ENCODE measurements at regions of chr14 and their contacts with region 1.

Region 1: DNA sequence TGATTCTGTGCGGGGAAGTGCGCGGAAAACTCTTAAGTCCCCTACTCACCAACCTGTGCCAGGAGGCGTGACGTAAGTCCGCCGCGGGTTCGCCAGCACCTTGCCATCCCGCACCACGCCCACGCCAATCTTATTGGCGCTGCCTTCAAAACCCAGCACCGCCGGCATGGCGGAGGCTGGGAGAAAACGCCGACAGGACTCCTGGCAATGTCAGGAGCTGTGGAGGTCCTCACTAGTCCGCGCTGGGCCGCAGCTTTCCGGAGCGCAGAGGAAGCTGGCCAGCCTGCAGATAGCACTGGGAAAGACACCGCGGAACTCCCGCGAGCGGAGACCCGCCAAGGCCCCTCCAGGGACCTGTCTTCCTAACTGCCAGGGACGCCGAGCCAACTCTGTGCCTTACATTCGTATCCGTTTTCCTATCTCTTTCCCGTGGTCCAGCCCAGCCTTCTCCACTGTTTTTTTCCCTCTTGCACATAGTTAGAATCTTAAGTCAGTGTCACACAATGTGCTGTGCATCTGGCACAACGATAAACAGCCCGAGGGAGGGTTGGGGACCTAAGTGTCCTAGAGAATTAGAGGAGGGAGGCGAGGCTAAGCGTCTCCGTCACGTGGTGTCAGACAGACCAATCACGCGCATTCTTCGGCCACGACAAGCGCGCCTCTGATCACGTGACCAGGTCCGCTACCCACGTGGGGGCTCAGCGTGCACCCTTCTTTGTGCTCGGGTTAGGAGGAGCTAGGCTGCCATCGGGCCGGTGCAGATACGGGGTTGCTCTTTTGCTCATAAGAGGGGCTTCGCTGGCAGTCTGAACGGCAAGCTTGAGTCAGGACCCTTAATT is at the starts of genes APEX1 and OSGEP:
- DNase-seq: peak; percentile 97 to 100 (median 99)

Region 2: GRCh38 chr14:20413045-20413799 is 41.5 kb before region 1 on chr14 and contains the start of gene TEP1:
- intact Hi-C with region 1: loop called (anchors 2 kb)
- DNase-seq: peak; percentile 63 to 96 (median 80)

Region 3: DNA sequence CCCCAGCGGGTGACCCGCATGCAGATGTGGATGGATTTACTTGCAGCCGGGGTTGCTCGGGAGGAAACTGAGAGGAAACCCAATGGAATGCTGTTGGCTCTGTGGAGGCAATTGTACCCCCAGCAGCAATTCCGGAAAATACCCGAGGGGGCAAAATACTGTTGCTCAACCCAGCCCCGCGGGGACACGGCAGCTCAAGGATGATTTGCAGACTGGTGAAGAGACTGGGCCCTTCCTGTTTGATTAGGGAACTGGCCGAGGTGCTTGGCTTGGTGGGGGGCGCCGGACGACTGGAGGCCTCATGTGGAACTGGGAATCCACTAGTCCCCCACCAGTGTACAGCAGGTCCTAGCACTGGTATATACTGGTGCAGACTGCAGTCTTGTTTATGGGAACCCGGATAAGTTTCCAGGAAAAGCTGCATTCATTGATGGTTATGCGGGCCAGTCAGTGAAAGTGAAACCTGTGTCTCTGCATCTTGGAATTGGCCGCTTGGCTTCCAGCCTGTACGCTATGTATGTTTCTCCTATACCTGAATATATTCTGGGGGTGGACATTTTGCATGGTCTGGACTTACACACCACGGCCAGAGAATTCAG is 146.8 kb after region 1 on chr14:
- intact Hi-C with region 1: no loop called
- DNase-seq: peak in 1 of 10 donors; percentile 75